Activated CD4-positive, alpha-beta memory T cell treated with anti-CD3 and anti-CD28 coated beads for 36 hours (primary cell): ENCODE measurements at regions of chr14 and their contacts with region 1.

Region 1: GRCh38 chr14:98931911-98932310 is 340.1 kb downstream of the BCL11B start:
- DNase-seq: peak; percentile 81
- H3K4me3 Mint-ChIP-seq: peak overlapping the region; percentile 49
- H3K27ac Mint-ChIP-seq: peak overlapping the region; percentile 71
- H3K4me1 Mint-ChIP-seq: peaks cover 58% of the 10 kb centered on the region
- H3K27me3 Mint-ChIP-seq: no peaks in the 10 kb centered on the region

Region 2: GRCh38 chr14:98711453-98711852 is 220.5 kb before region 1 on chr14:
- CTCF ChIA-PET with region 1: no interaction called
- POLR2A ChIA-PET with region 1: no interaction called
- intact Hi-C with region 1: no loop called
- DNase-seq: peak; percentile 11
- H3K4me3 Mint-ChIP-seq: no peak overlapping the region
- H3K27ac Mint-ChIP-seq: no peak overlapping the region
- H3K4me1 Mint-ChIP-seq: peaks cover 18% of the 10 kb centered on the region
- H3K27me3 Mint-ChIP-seq: no peaks in the 10 kb centered on the region

Region 3: GRCh38 chr14:98984719-98985041 is 52.8 kb after region 1 on chr14:
- CTCF ChIA-PET with region 1: no interaction called
- POLR2A ChIA-PET with region 1: no interaction called
- intact Hi-C with region 1: loop called (anchors 2 kb)
- DNase-seq: peak; percentile 89
- H3K4me3 Mint-ChIP-seq: peak overlapping the region; percentile 70
- H3K27ac Mint-ChIP-seq: peak overlapping the region; percentile 95
- H3K4me1 Mint-ChIP-seq: peaks cover 35% of the 10 kb centered on the region
- H3K27me3 Mint-ChIP-seq: no peaks in the 10 kb centered on the region

Region 4: GRCh38 chr14:99127651-99128167 is 195.8 kb after region 1 on chr14:
- CTCF ChIA-PET with region 1: no interaction called
- POLR2A ChIA-PET with region 1: no interaction called
- intact Hi-C with region 1: no loop called
- DNase-seq: no peak
- H3K4me3 Mint-ChIP-seq: no peak overlapping the region
- H3K27ac Mint-ChIP-seq: no peak overlapping the region
- H3K4me1 Mint-ChIP-seq: peaks cover 11% of the 10 kb centered on the region
- H3K27me3 Mint-ChIP-seq: no peaks in the 10 kb centered on the region